ENCODE measurements at regions of chr6 and their contacts with region 1.

Region 1: DNA sequence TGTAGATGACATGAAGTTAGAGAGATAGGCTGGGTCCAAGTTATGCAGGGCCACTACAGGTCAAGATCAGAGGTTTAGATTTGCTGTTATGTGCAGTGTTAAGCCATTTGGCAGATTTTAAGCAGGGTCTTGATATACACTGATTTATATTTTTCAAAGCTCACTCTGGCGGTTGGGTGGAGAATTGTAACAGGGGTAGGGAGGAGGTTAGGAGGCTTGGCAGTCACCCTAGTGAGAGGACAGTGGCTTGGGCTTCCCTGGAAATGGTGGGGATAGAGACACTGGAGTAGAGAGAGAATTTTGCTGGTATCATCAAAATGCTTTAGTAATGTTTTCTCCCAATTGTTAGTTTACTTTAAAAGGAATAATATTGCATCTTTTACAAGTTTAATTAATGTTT is 149.5 kb upstream of the SUPT3H start:
- DNase-seq: no peak
- ATAC-seq: no peak
- H3K4me3 ChIP-seq: no peak overlapping the region
- H3K27ac ChIP-seq: no peak overlapping the region
- H3K4me1 ChIP-seq: peaks cover 0 to under 1% (median 0%) of the 10 kb centered on the region in 12 donors
- H3K27me3 ChIP-seq: no peaks in the 10 kb centered on the region
- CTCF ChIP-seq: no peak
- POLR2A ChIP-seq: no peak

Region 2: DNA sequence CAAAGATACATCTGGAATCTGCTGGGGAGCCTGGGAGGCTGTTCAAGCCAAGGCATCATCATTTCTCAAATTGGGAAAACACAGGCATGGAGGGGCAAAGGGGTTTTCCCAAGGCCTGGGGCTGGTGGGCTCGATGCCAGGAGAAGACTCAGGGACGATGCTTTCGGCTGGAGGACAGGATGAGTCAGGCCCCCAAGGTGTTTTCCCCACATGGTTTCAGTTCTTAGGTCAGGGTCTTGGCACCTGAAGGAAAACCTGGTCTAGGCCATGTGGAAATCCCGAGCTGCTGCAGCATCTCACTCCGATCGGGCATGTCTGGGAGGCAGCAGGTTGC is 791.6 kb before region 1 on chr6:
- intact Hi-C with region 1: loop called in 1 of 10 experiments (anchors 5 kb)
- DNase-seq: no peak
- ATAC-seq: no peak
- H3K4me3 ChIP-seq: no peak overlapping the region
- H3K27ac ChIP-seq: no peak overlapping the region
- H3K4me1 ChIP-seq: peaks cover 0 to 14% (median 0%) of the 10 kb centered on the region in 12 donors
- H3K27me3 ChIP-seq: no peaks in the 10 kb centered on the region
- CTCF ChIP-seq: no peak
- POLR2A ChIP-seq: no peak

Region 3: DNA sequence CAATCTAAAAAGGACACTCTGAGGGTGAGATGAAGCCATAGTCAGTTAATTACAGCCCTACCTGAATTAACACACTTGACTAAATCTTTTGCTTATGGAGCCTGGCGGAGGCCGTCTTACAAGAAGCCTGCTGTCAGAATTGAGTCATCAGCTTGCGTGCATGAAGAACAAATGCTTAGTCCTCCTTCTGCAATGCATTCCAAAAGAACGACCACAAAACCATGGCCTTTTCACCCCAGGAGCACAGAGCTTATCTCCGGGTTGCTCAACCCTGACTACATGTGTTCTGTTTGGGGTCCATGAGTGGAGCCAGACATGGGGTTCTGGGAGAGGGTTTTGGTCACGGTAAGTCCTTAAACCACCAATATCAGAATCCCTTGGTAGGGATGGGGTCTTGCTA is 170.4 kb after region 1 on chr6:
- intact Hi-C with region 1: no loop called
- DNase-seq: no peak
- ATAC-seq: no peak
- H3K4me3 ChIP-seq: no peak overlapping the region
- H3K27ac ChIP-seq: no peak overlapping the region
- H3K4me1 ChIP-seq: no peaks in the 10 kb centered on the region
- H3K27me3 ChIP-seq: no peaks in the 10 kb centered on the region
- CTCF ChIP-seq: no peak
- POLR2A ChIP-seq: no peak